CD8-positive, alpha-beta memory T cell (primary cell): ENCODE measurements at regions of chr11 and their contacts with region 1.

Region 1: DNA sequence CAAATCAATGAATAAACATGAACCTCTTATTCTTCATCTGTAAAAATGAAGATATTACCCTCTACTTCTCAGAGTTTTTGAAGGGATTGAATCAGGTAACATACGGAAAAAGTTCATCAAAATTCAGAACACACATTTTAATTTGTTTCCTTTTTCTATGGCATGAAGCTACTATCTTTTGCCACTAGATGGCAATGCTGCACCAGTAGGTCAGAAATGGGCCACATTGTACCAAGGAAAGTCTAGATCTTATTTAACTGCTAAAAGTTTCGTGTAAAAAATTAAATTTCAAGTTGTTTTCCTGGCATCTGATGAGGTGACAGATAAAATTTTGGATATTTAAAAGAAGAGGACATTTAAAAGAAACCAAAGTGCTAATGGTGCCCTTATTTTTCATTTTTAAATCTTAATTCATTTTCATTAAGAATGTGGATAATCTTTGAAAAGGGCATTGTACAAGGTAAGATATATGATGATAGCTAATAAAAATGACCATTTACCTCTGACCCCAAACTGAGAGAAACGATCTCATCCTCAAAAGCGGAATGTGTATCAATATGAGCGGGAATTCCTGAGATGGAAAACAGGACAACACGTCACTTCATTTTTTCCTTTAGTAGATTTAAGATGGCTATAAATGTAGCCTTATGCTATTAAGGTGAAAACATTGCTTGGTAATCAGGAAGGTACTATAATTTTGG is 16.1 kb downstream of the ALKBH8 start:
- DNase-seq: peak in 3 of 5 donors; percentile 7 to 27 (median 14)
- H3K4me3 ChIP-seq: no peak overlapping the region
- H3K4me3 Mint-ChIP-seq: no peak overlapping the region
- H3K27ac ChIP-seq: no peak overlapping the region
- H3K27ac Mint-ChIP-seq: peak overlapping the region in 2 of 8 donors; percentile 11 to 31
- H3K4me1 ChIP-seq: no peaks in the 10 kb centered on the region
- H3K4me1 Mint-ChIP-seq: peaks cover 3 to 4% (median 4%) of the 10 kb centered on the region in 3 donors
- H3K27me3 ChIP-seq: no peaks in the 10 kb centered on the region
- H3K27me3 Mint-ChIP-seq: no peaks in the 10 kb centered on the region

Region 2: DNA sequence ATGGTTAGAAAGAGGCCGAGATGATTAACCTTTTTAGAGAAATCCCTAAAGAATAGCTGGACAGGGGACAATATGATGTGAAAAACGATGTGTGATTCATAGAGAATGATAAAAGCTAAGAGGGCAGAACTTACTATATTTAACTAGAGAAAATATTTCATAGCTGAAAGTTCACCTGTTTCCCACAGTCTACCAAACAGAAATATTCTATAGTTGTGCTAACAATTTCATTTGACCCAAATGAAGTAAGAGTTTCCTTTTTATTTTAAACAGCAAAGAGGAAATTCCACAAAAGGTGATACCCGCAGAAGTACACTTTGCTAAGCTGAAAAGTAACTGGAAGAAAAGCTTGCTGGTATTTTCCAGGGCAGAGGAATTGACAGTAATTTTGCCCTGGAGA is 10.6 kb before region 1 on chr11:
- CTCF ChIA-PET with region 1: interaction called, 16 read pairs
- POLR2A ChIA-PET with region 1: no interaction called
- DNase-seq: no peak
- H3K4me3 ChIP-seq: no peak overlapping the region
- H3K4me3 Mint-ChIP-seq: no peak overlapping the region
- H3K27ac ChIP-seq: no peak overlapping the region
- H3K27ac Mint-ChIP-seq: peak overlapping the region in 1 of 8 donors; percentile 38
- H3K4me1 ChIP-seq: no peaks in the 10 kb centered on the region
- H3K4me1 Mint-ChIP-seq: peaks cover 2 to 6% (median 2%) of the 10 kb centered on the region in 3 donors
- H3K27me3 ChIP-seq: no peaks in the 10 kb centered on the region
- H3K27me3 Mint-ChIP-seq: no peaks in the 10 kb centered on the region